Prostate gland (tissue), 2 donors: ENCODE measurements at regions of chr2 and their contacts with region 1.

Region 1: GRCh38 chr2:200288658-200289427 is 17.6 kb upstream of the SPATS2L start:
- DNase-seq: peak; percentile 47
- H3K4me3 ChIP-seq: no peak overlapping the region
- H3K27ac ChIP-seq: no peak overlapping the region
- H3K4me1 ChIP-seq: no peaks in the 10 kb centered on the region
- H3K27me3 ChIP-seq: no peaks in the 10 kb centered on the region
- CTCF ChIP-seq: no peak
- POLR2A ChIP-seq: no peak

Region 2: GRCh38 chr2:200054681-200055468 is 234.0 kb before region 1 on chr2:
- intact Hi-C with region 1: loop called (anchors 10 kb)
- DNase-seq: no peak
- H3K4me3 ChIP-seq: no peak overlapping the region
- H3K27ac ChIP-seq: no peak overlapping the region
- H3K4me1 ChIP-seq: no peaks in the 10 kb centered on the region
- H3K27me3 ChIP-seq: no peaks in the 10 kb centered on the region
- CTCF ChIP-seq: no peak
- POLR2A ChIP-seq: no peak

Region 3: GRCh38 chr2:200466425-200467418 is 177.9 kb after region 1 on chr2:
- intact Hi-C with region 1: no loop called
- DNase-seq: no peak
- H3K4me3 ChIP-seq: no peak overlapping the region
- H3K27ac ChIP-seq: peak overlapping the region; percentile 43 to 49
- H3K4me1 ChIP-seq: no peaks in the 10 kb centered on the region
- H3K27me3 ChIP-seq: no peaks in the 10 kb centered on the region
- CTCF ChIP-seq: no peak
- POLR2A ChIP-seq: no peak